Mammary epithelial cell (primary cell): ENCODE measurements at regions of chr1 and their contacts with region 1.

Region 1: DNA sequence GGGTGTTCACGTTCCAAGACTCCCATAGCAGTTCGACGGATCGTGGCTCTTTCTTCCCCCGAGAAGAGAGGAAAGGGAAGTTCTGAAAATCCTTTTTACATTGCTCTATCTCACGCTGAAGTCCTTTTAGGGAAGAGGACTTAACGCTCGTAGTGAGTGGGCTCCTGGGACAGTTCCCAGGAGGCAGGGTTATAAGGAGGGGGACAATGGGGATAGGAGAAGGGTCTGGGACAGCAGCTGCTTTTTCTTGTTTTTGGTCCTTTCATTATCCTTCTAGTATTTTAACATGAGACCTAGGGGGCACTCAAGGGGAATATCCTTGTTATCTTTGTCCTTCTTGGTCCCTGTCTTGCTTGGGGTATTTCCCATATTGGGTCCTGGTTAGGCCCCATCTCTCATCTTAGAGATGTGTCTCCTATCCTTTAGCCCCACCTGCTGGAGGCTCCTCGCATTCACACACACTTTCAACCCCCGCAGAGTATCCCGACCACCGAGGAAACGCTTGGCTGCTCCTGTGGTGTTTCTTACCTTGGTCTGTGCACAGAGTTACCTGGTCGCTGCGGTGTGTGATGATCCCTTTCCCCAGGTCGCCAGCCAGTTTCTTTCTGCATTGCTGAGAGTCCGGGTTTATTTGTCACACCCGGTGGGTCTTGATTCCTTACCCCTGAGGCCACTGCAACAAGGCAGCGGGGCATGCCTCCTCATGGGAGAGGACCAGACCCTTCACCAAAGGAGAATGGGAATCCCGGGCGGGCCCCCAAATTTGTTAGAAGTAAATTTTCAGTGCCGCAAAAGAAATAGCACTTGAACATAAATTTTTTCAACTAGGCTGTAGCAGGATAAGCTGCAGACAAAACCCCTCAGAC is 29.7 kb downstream of the SCCPDH start:
- DNase-seq: peak; percentile 34
- H3K4me3 ChIP-seq: peak overlapping the region in 1 of 3 experiments; percentile 18
- H3K27ac ChIP-seq: no peak overlapping the region
- H3K4me1 ChIP-seq: no peaks in the 10 kb centered on the region
- H3K27me3 ChIP-seq: no peaks in the 10 kb centered on the region
- CTCF ChIP-seq: peak; percentile 67 to 90

Region 2: DNA sequence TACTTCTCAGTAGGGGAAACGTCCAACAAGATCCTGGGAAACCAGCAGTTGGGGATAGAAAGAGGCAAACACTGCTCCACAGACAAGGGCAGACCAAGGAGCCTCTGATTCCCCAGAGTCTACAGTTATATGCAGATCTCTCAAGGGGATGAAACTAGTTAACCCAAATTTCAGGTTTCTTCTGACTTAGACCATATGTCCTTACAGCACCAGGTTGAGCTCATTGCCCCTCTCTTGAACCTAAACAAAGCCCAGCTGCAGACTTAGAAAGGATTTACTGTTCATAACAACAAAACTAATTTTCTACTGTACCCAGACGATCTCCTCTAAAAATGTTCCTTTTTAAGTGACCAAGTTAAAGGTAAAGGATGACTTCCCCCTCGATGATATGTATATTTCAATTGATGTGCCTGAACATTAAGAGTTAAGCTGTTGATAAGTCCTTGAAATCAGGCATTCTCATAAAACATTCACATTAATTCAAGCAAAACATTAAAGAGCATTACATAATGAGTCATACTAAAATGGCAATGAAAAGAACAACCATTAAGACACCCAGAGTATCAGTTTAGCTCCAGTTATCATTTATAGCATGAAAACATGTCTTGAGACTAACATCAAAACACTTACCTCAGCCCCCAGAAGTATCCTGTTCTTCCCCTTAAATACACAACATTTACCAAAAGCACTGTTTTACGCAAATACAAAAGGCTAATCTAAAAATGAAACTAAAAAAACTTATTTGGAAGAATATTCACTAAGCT is 270.9 kb before region 1 on chr1:
- CTCF ChIA-PET with region 1: no interaction called
- dilution Hi-C with region 1: no loop called
- in situ Hi-C with region 1: no loop called
- intact Hi-C with region 1: no loop called
- DNase-seq: no peak
- H3K4me3 ChIP-seq: no peak overlapping the region
- H3K27ac ChIP-seq: no peak overlapping the region
- H3K4me1 ChIP-seq: no peaks in the 10 kb centered on the region
- H3K27me3 ChIP-seq: no peaks in the 10 kb centered on the region
- CTCF ChIP-seq: no peak

Region 3: GRCh38 chr1:246689409-246690008 is 64.4 kb before region 1 on chr1:
- CTCF ChIA-PET with region 1: no interaction called
- dilution Hi-C with region 1: no loop called
- in situ Hi-C with region 1: loop called in 1 of 2 experiments (anchors 10 kb)
- intact Hi-C with region 1: loop called (anchors 1 kb)
- DNase-seq: peak; percentile 76
- H3K4me3 ChIP-seq: peak overlapping the region; percentile 45 to 60 (median 50)
- H3K27ac ChIP-seq: no peak overlapping the region
- H3K4me1 ChIP-seq: peaks cover 5% of the 10 kb centered on the region
- H3K27me3 ChIP-seq: no peaks in the 10 kb centered on the region
- CTCF ChIP-seq: peak; percentile 87 to 90

Region 4: GRCh38 chr1:246699095-246699735 is 54.7 kb before region 1 on chr1:
- CTCF ChIA-PET with region 1: no interaction called
- dilution Hi-C with region 1: no loop called
- in situ Hi-C with region 1: loop called in 1 of 2 experiments (anchors 10 kb)
- intact Hi-C with region 1: loop called (anchors 2 kb)
- DNase-seq: peak; percentile 75
- H3K4me3 ChIP-seq: no peak overlapping the region
- H3K27ac ChIP-seq: no peak overlapping the region
- H3K4me1 ChIP-seq: no peaks in the 10 kb centered on the region
- H3K27me3 ChIP-seq: no peaks in the 10 kb centered on the region
- CTCF ChIP-seq: peak; percentile 63 to 87

Region 5: GRCh38 chr1:246794835-246795671 is 41.1 kb after region 1 on chr1:
- CTCF ChIA-PET with region 1: no interaction called
- dilution Hi-C with region 1: no loop called
- in situ Hi-C with region 1: no loop called
- intact Hi-C with region 1: no loop called
- DNase-seq: peak; percentile 35
- H3K4me3 ChIP-seq: no peak overlapping the region
- H3K27ac ChIP-seq: no peak overlapping the region
- H3K4me1 ChIP-seq: no peaks in the 10 kb centered on the region
- H3K27me3 ChIP-seq: no peaks in the 10 kb centered on the region
- CTCF ChIP-seq: no peak